HEK293 (cell line): ENCODE measurements at regions of chr13 and their contacts with region 1.

Region 1: GRCh38 chr13:46975173-46975572 is 78.3 kb upstream of the HTR2A start:
- H3K4me3 ChIP-seq: no peak overlapping the region
- H3K27ac ChIP-seq: no peak overlapping the region
- H3K4me1 ChIP-seq: no peaks in the 10 kb centered on the region
- CTCF ChIP-seq: no peak

Region 2: GRCh38 chr13:47004027-47004426 is 28.9 kb after region 1 on chr13:
- CTCF ChIA-PET with region 1: interaction called, 10 read pairs
- POLR2A ChIA-PET with region 1: no interaction called
- H3K4me3 ChIP-seq: no peak overlapping the region
- H3K27ac ChIP-seq: no peak overlapping the region
- H3K4me1 ChIP-seq: no peaks in the 10 kb centered on the region
- CTCF ChIP-seq: no peak

Region 3: DNA sequence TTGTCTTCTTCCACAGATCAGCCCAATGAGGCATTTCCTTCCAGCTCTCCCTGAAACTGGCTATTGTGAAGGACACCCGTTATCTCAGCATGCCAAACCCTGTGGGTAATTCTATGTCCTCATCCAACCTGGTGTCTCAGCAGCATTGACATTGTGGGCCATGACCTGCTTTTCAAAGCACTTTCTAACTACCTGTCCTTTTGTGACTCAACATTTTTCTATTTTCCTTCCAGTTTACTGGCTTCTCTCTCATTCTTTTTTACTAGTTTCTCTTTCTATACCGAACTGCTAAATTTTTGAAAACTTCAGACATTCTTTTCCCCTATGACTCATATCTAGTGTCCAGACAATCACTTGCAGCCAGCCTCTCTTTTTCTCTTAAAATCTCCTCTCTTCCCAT is 58.0 kb after region 1 on chr13:
- CTCF ChIA-PET with region 1: no interaction called
- POLR2A ChIA-PET with region 1: no interaction called
- H3K4me3 ChIP-seq: no peak overlapping the region
- H3K27ac ChIP-seq: no peak overlapping the region
- H3K4me1 ChIP-seq: no peaks in the 10 kb centered on the region
- CTCF ChIP-seq: no peak